Mammary epithelial cell (primary cell): ENCODE measurements at regions of chr6 and their contacts with region 1.

Region 1: GRCh38 chr6:46491628-46492547 is 639 bp upstream of the RCAN2 start:
- DNase-seq: peak; percentile 33
- H3K4me3 ChIP-seq: peak overlapping the region; percentile 37 to 61 (median 43)
- H3K27ac ChIP-seq: no peak overlapping the region
- H3K4me1 ChIP-seq: peaks cover 17% of the 10 kb centered on the region
- H3K27me3 ChIP-seq: peaks cover 26% of the 10 kb centered on the region
- CTCF ChIP-seq: peak; percentile 1 to 44

Region 2: GRCh38 chr6:46626228-46626909 is 134.5 kb after region 1 on chr6:
- CTCF ChIA-PET with region 1: no interaction called
- dilution Hi-C with region 1: no loop called
- in situ Hi-C with region 1: no loop called
- intact Hi-C with region 1: loop called (anchors 5 kb)
- DNase-seq: peak; percentile 31
- H3K4me3 ChIP-seq: no peak overlapping the region
- H3K27ac ChIP-seq: no peak overlapping the region
- H3K4me1 ChIP-seq: no peaks in the 10 kb centered on the region
- H3K27me3 ChIP-seq: no peaks in the 10 kb centered on the region
- CTCF ChIP-seq: peak; percentile 62 to 66